Activated T-helper 1 cell treated with anti-CD3 and anti-CD28 coated beads, Interleukin-12 subunit alpha, Interleukin-12 subunit beta, Interleukin-2, Interleukin-4 antibody, amounts not matched to agents 30 ng/mL and 10 ng/mL and 1 ng/mL, durations not matched to agents 14 hours and 24 hours and 36 hours (primary cell): ENCODE measurements at regions of chr10 and their contacts with region 1.

Region 1: DNA sequence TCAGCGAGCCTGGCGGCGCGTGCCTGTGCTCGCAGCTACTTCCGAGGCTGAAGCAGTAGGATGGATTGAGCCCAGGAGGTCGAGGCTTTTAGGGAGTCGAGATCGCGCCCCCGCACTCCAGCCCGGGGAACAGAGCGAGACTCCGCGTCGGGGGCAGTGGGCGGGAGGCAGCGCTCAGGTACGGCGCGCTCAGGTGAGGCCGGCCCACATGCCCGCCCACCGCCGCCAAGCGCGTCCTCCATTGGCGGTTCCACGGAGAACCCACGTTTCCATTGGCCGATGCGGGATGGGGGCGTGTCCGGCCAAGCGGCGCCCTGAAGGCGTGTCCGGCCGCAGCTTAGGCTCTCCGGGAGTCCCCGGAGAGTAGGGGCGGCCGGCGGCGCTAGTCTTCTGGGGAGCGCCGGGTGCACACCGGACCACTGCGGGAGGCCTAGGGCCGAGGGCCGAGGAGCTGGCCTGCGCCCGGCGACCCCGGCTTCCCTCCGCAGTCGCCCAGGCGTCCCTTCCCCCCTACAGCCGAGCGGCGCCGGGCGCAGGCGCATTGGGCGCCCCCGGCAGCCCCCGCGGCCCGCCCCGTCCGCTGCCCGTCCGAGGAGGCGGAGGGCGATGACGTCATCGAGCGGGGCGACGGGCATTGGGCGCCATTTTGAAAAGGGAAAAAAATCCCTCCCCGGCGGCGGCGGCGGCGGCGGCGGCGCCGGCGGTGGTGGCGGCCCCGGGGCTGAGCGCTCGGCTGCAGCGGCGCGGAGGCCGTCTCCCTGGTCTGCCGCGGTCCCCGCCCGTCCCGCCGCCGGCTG is at the start of gene PPP2R2D:
- DNase-seq: peak; percentile 95
- H3K4me3 Mint-ChIP-seq: peak within 1 kb of the TSS; percentile 91
- H3K27ac Mint-ChIP-seq: peak within 1 kb of the TSS; percentile 83
- H3K4me1 Mint-ChIP-seq: peaks cover 55% of the 10 kb centered on the region
- H3K27me3 Mint-ChIP-seq: peaks cover 18% of the 10 kb centered on the region
- total RNA-seq, gene PPP2R2D: 37.6 and 38.4 TPM in 2 replicates

Region 2: GRCh38 chr10:131885391-131886161 is 15.0 kb before region 1 on chr10:
- intact Hi-C with region 1: loop called (anchors 2 kb)
- DNase-seq: peak; percentile 73
- H3K4me3 Mint-ChIP-seq: no peak overlapping the region
- H3K27ac Mint-ChIP-seq: no peak overlapping the region
- H3K4me1 Mint-ChIP-seq: no peaks in the 10 kb centered on the region
- H3K27me3 Mint-ChIP-seq: peaks cover 7% of the 10 kb centered on the region

Region 3: GRCh38 chr10:131928248-131929095 is 27.9 kb after region 1 on chr10:
- intact Hi-C with region 1: loop called (anchors 1 kb)
- DNase-seq: peak; percentile 31
- H3K4me3 Mint-ChIP-seq: peak overlapping the region; percentile 34
- H3K27ac Mint-ChIP-seq: peak overlapping the region; percentile 85
- H3K4me1 Mint-ChIP-seq: peaks cover 65% of the 10 kb centered on the region
- H3K27me3 Mint-ChIP-seq: no peaks in the 10 kb centered on the region

Region 4: DNA sequence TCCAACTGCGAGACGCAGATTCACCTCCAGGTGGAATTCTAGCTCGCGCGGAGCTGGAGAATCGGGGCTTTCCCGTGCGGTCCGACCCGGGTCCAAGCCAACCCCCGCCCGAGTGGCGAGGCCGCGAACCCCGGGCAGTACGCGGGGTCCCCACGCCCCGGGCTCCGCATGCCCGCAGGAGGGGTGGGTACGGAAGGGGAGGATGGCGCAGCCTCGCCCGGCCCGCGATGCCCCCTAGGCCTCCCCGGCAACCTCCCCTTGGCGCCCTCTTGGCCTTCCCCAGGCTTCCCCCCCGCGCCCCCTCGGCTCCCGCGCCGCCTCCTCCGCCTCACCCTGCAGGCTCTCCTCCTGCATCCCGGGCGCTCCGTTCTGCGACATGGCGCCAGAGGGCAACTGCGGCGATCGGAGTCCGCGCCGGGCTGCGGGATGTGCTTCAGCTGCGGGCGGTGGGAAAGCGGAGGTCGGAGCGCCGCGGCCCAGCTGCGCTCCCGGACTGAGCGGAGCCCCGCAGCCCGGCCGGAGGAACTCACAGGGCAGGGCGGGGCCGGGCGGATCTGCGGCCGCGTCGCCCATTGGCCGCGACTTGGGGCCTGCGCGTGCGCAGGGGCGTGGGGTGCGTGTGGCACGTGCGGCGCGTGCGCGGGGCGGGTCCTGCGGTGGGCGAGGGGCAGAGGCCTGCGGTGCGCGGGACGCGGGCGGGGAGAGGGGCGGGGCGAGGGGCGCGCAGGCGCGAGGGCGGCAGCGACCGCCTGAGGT is 81.1 kb after region 1 on chr10 and contains the start of gene BNIP3:
- intact Hi-C with region 1: loop called (anchors 1 kb)
- DNase-seq: peak; percentile 90
- H3K4me3 Mint-ChIP-seq: peak within 1 kb of the TSS; percentile 88
- H3K27ac Mint-ChIP-seq: peak within 1 kb of the TSS; percentile 48
- H3K4me1 Mint-ChIP-seq: peaks cover 36% of the 10 kb centered on the region
- H3K27me3 Mint-ChIP-seq: peaks cover 25% of the 10 kb centered on the region
- total RNA-seq, gene BNIP3: 43.0 and 48.9 TPM in 2 replicates

Region 5: DNA sequence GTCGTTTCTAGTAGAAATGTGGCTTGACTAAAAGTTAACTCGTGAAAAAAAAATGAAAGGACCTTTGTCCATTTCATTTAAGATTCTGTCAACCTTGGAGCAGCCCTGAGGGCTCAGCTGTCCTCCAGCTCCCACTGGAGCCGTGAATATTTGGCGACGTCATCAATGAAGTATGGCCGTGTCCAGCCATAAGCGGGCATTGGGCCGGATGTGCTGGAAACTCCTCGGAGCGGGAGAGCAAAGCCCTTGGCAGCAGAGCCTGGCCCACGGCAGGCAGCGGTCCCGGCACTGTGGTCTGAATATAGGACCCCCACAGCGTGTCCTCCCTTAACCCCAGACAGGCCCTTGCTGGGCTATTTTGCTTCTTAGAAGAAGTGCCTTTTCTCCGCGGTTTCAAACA is 215.2 kb after region 1 on chr10:
- intact Hi-C with region 1: no loop called
- DNase-seq: no peak
- H3K4me3 Mint-ChIP-seq: no peak overlapping the region
- H3K27ac Mint-ChIP-seq: no peak overlapping the region
- H3K4me1 Mint-ChIP-seq: no peaks in the 10 kb centered on the region
- H3K27me3 Mint-ChIP-seq: peaks cover 2% of the 10 kb centered on the region

Region 6: GRCh38 chr10:132307823-132308587 is 407.5 kb after region 1 on chr10 and contains the start of gene STK32C:
- intact Hi-C with region 1: loop called (anchors 2 kb)
- DNase-seq: peak; percentile 80
- H3K4me3 Mint-ChIP-seq: peak within 1 kb of the TSS; percentile 87
- H3K27ac Mint-ChIP-seq: peak within 1 kb of the TSS; percentile 89
- H3K4me1 Mint-ChIP-seq: no peaks in the 10 kb centered on the region
- H3K27me3 Mint-ChIP-seq: peaks cover 39% of the 10 kb centered on the region
- total RNA-seq, gene STK32C: 14.6 and 15.5 TPM in 2 replicates

Region 7: GRCh38 chr10:133278577-133279265 is 1378.2 kb after region 1 on chr10:
- intact Hi-C with region 1: loop called (anchors 10 kb)
- DNase-seq: peak; percentile 63
- H3K4me3 Mint-ChIP-seq: peak overlapping the region; percentile 87
- H3K27ac Mint-ChIP-seq: peak overlapping the region; percentile 86
- H3K4me1 Mint-ChIP-seq: peaks cover 14% of the 10 kb centered on the region
- H3K27me3 Mint-ChIP-seq: no peaks in the 10 kb centered on the region